K562 (cell line): ENCODE measurements at regions of chrX and their contacts with region 1.

Region 1: DNA sequence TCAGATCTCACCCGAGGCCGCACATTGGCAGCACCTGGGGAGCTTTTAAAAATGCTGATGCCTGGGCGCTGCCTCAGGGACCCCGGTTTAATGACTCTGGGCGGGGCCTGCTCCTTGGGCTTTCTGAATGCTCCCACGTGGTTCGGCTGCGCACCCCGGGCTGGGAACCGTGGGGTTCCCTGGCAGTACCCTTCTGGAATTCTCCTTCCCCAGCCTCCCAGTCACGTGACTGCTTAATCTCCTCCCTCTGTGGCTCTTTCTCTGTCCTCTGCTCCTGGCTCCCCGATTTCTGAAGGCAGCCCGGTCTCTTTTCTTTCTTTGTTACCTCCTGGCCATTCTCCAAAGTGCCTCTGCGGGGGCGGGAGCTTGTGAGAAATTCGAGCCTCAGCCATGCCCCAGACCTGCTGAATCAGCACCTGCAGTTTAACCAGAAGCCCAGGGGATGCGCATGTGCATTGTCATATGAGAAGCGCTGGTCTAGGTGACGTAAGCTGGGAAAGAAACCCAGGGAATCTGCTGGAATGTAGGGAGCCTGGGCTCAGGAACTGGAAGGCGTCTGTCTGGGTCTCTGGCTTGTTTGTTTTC is 16.6 kb downstream of the CLCN4 start:
- DNase-seq: peak; percentile 51 to 77 (median 62)
- ATAC-seq: peak; percentile 85
- H3K4me3 ChIP-seq: no peak overlapping the region
- H3K27ac ChIP-seq: peak overlapping the region; percentile 48; the same call in 1 of the 3 replicates
- H3K4me1 ChIP-seq: peaks cover 28 to 46% of the 10 kb centered on the region in 2 experiments
- H3K27me3 ChIP-seq: no peaks in the 10 kb centered on the region; a peak in 1 of 5 replicates
- CTCF ChIP-seq: no peak
- EP300 ChIP-seq: no peak
- POLR2A ChIP-seq: no peak
- RAD21 ChIP-seq: no peak

Region 2: DNA sequence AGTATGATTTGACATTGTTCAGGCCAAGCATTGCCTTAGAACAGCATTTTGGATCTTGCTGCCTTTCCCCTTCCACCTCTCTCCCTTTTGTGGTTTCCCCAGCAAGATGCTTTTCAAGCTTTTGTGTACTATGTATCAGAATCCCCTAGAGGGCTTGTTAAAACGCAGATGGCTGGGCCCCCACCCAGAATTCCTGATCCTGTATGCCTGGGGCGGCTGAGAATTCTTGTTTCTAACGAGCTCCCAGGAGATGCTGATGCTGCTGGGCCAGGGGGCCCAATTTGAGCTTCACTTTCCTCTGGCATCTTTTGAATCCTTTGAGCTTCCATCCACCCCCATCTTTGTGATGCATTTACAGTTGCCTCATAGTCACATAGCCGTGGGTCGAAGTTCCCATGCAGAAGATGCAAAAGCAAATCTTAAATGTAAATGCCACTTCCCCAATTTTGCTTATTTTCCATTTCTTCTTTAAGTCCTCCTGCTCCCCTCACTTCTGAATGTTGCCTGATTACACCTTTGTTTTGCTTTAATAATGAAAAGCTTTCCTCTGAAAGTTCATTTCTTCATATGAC is 956.2 kb after region 1 on chrX:
- CTCF ChIA-PET with region 1: no interaction called
- POLR2A ChIA-PET with region 1: no interaction called
- in situ Hi-C with region 1: loop called (anchors 10 kb)
- intact Hi-C with region 1: no loop called
- DNase-seq: no peak
- ATAC-seq: no peak
- H3K4me3 ChIP-seq: no peak overlapping the region
- H3K27ac ChIP-seq: no peak overlapping the region
- H3K4me1 ChIP-seq: peaks cover 0 to 2% of the 10 kb centered on the region in 2 experiments; a peak in 2 of 5 replicates
- H3K27me3 ChIP-seq: no peaks in the 10 kb centered on the region
- CTCF ChIP-seq: no peak
- EP300 ChIP-seq: no peak
- POLR2A ChIP-seq: no peak
- RAD21 ChIP-seq: no peak